CD4-positive, alpha-beta memory T cell (primary cell): ENCODE measurements at regions of chr10 and their contacts with region 1.

Region 1: GRCh38 chr10:95693668-95694534 is at the start of gene TCTN3:
- DNase-seq: peak; percentile 97 to 99 (median 98)
- H3K4me3 ChIP-seq: peak within 1 kb of the TSS; percentile 73 to 97
- H3K4me3 Mint-ChIP-seq: peak within 1 kb of the TSS; percentile 94 to 98 (median 96)
- H3K27ac ChIP-seq: peak within 1 kb of the TSS; percentile 87
- H3K27ac Mint-ChIP-seq: peak within 1 kb of the TSS; percentile 96 to 99 (median 98)
- H3K4me1 ChIP-seq: peaks cover 29% of the 10 kb centered on the region
- H3K4me1 Mint-ChIP-seq: peaks cover 22 to 52% (median 33%) of the 10 kb centered on the region in 4 donors
- H3K27me3 ChIP-seq: no peaks in the 10 kb centered on the region
- H3K27me3 Mint-ChIP-seq: no peaks in the 10 kb centered on the region
- total RNA-seq, gene TCTN3: 20.5 to 22.2 TPM

Region 2: GRCh38 chr10:95447685-95448084 is 246.2 kb before region 1 on chr10:
- CTCF ChIA-PET with region 1: no interaction called
- POLR2A ChIA-PET with region 1: no interaction called
- intact Hi-C with region 1: no loop called
- DNase-seq: no peak
- H3K4me3 ChIP-seq: no peak overlapping the region
- H3K4me3 Mint-ChIP-seq: no peak overlapping the region
- H3K27ac ChIP-seq: no peak overlapping the region
- H3K27ac Mint-ChIP-seq: no peak overlapping the region
- H3K4me1 ChIP-seq: no peaks in the 10 kb centered on the region
- H3K4me1 Mint-ChIP-seq: peaks cover 0 to 1% (median 0%) of the 10 kb centered on the region in 4 donors
- H3K27me3 ChIP-seq: no peaks in the 10 kb centered on the region
- H3K27me3 Mint-ChIP-seq: peaks cover 2 to 4% of the 10 kb centered on the region in 2 donors

Region 3: DNA sequence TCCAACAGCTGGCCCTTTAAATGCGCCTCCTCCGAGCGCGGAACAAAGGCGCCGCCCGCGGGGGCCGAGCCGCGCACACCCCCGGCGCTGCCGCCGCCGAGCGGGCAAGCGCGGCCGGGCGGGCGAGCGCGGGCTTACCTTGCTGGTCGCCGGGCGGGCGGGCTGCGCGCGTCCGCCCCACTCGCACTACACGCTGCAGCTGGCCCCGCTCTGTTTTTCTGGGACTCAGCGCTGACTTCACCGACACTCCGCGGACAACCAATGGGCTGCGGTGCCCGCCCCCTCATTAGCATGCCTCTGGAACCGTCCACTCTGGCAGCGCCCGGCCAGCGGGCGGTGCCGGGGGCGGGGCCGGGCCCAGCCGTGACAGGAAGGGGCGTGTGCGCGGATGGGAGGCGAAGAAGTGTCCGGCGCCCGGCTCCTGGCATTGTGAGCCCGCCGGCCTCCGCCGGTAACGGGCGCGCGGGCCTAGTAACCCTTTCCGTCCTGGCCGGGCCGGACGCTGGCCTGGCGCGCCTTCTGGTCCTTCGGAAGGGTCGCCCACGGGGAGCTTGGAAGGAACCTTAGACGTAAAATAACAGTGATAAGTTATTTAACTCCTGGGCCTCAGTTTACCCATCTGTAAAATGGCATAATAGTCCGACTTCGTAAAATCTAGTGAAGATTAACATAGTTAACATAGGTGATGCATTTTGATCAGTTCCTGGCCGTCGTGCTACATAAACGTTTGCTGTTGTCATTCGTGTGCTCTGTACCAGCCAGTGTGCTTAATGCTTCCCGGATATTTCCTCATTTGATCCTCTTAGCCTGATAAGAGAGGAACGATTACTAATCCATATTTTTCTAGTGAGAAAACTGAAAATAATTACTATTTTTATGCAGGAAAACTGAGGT is 132.5 kb before region 1 on chr10 and contains the start of gene SORBS1:
- CTCF ChIA-PET with region 1: interaction called, 5 read pairs
- POLR2A ChIA-PET with region 1: interaction called, 3 read pairs
- intact Hi-C with region 1: loop called (anchors 1 kb)
- DNase-seq: peak; percentile 85 to 92 (median 87)
- H3K4me3 ChIP-seq: peak within 1 kb of the TSS; percentile 90 to 92
- H3K4me3 Mint-ChIP-seq: peak within 1 kb of the TSS; percentile 96 to 100 (median 100)
- H3K27ac ChIP-seq: peak within 1 kb of the TSS; percentile 54
- H3K27ac Mint-ChIP-seq: peak within 1 kb of the TSS; percentile 83 to 99 (median 96)
- H3K4me1 ChIP-seq: peaks cover 10% of the 10 kb centered on the region
- H3K4me1 Mint-ChIP-seq: peaks cover 8 to 23% (median 11%) of the 10 kb centered on the region in 4 donors
- H3K27me3 ChIP-seq: no peaks in the 10 kb centered on the region
- H3K27me3 Mint-ChIP-seq: peaks cover 0 to 4% of the 10 kb centered on the region in 2 donors
- total RNA-seq, gene SORBS1: 0.67 to 0.93 TPM

Region 4: DNA sequence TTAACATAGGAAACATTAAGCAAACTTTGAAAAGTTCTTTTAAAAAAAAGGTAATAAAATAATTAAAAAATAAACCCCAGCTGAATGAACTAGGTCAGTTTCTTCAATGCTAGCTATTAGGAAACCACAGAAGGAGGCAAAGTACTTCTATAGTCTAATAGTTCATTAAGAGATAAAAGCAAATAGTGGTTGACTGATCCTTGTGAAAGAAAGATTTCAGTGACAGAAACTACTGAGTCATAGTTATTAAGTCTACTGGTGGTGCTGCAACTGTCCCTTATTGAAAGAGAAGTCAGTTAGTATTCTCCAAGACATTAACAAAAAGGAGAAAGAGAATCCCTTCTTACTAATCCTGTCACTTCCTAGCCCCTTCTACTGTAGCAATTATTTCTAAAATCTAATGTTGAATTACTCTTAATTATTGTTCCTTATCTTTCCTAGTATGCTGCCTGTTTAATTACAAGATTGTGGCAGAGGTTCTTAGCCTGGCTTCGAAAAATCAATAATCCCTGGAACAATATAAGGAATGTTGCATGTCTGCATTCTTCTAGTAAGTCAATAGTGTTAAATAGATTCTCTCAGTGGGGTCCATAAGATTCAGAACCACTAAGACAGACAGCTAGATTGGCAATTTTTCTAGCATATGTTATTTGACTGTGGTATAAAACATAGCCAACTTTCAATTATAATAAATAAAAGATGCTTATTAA is 18.3 kb before region 1 on chr10:
- CTCF ChIA-PET with region 1: interaction called, 36 read pairs
- POLR2A ChIA-PET with region 1: interaction called, 3 read pairs
- intact Hi-C with region 1: no loop called
- DNase-seq: no peak
- H3K4me3 ChIP-seq: no peak overlapping the region
- H3K4me3 Mint-ChIP-seq: no peak overlapping the region
- H3K27ac ChIP-seq: no peak overlapping the region
- H3K27ac Mint-ChIP-seq: no peak overlapping the region
- H3K4me1 ChIP-seq: no peaks in the 10 kb centered on the region
- H3K4me1 Mint-ChIP-seq: no peaks in the 10 kb centered on the region
- H3K27me3 ChIP-seq: no peaks in the 10 kb centered on the region
- H3K27me3 Mint-ChIP-seq: no peaks in the 10 kb centered on the region

Region 5: DNA sequence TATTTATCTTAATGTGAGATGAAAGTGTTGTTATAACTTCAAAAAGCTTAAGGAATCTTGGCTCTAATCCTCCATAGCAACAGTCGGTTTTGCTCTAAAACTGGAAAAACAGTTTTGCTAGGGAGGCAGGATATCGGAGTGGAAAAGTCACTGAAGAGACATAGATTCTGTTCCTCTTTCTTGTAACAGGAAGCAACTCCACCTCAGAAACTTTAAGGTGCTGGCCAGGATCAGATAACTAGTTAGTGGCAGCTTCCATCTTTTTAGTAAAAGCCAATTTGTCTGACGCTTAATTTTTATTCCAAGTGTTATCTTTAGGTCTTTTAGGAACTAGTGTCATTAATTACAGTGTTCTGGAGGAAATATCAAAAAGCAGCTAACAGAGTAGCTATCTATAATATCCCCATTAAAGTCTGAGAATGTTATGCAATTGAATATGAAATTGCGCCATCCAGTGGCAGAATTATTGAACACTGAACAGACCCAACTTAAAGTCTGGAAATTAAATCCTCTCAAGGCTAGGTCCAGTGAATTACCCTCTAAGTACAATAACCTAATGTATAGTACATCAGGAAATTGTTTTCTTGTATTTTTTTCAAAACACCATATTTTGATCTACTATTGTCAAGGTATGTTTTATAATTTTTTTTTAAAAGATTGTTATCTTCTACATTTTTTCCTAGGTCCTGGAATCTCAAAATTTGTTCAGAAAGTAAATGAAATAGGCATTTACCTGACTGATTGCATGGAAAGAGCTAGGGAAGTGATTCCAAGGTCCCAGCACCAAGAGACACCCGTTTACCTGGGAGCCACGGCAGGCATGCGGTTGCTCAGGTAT is 148.0 kb after region 1 on chr10:
- CTCF ChIA-PET with region 1: interaction called, 290 read pairs
- POLR2A ChIA-PET with region 1: interaction called, 27 read pairs
- intact Hi-C with region 1: loop called (anchors 1 kb)
- DNase-seq: peak in 4 of 5 donors; percentile 28 to 57 (median 55)
- H3K4me3 ChIP-seq: no peak overlapping the region
- H3K4me3 Mint-ChIP-seq: no peak overlapping the region
- H3K27ac ChIP-seq: peak overlapping the region; percentile 35
- H3K27ac Mint-ChIP-seq: peak overlapping the region; percentile 26 to 88 (median 53)
- H3K4me1 ChIP-seq: peaks cover 8% of the 10 kb centered on the region
- H3K4me1 Mint-ChIP-seq: peaks cover 0 to 18% (median 3%) of the 10 kb centered on the region in 4 donors
- H3K27me3 ChIP-seq: no peaks in the 10 kb centered on the region
- H3K27me3 Mint-ChIP-seq: peaks cover 0 to 2% of the 10 kb centered on the region in 2 donors

Region 6: GRCh38 chr10:95880704-95881103 is 186.8 kb after region 1 on chr10:
- CTCF ChIA-PET with region 1: no interaction called
- POLR2A ChIA-PET with region 1: no interaction called
- intact Hi-C with region 1: no loop called
- DNase-seq: no peak
- H3K4me3 ChIP-seq: no peak overlapping the region
- H3K4me3 Mint-ChIP-seq: no peak overlapping the region
- H3K27ac ChIP-seq: no peak overlapping the region
- H3K27ac Mint-ChIP-seq: no peak overlapping the region
- H3K4me1 ChIP-seq: no peaks in the 10 kb centered on the region
- H3K4me1 Mint-ChIP-seq: no peaks in the 10 kb centered on the region
- H3K27me3 ChIP-seq: no peaks in the 10 kb centered on the region
- H3K27me3 Mint-ChIP-seq: no peaks in the 10 kb centered on the region

Region 7: DNA sequence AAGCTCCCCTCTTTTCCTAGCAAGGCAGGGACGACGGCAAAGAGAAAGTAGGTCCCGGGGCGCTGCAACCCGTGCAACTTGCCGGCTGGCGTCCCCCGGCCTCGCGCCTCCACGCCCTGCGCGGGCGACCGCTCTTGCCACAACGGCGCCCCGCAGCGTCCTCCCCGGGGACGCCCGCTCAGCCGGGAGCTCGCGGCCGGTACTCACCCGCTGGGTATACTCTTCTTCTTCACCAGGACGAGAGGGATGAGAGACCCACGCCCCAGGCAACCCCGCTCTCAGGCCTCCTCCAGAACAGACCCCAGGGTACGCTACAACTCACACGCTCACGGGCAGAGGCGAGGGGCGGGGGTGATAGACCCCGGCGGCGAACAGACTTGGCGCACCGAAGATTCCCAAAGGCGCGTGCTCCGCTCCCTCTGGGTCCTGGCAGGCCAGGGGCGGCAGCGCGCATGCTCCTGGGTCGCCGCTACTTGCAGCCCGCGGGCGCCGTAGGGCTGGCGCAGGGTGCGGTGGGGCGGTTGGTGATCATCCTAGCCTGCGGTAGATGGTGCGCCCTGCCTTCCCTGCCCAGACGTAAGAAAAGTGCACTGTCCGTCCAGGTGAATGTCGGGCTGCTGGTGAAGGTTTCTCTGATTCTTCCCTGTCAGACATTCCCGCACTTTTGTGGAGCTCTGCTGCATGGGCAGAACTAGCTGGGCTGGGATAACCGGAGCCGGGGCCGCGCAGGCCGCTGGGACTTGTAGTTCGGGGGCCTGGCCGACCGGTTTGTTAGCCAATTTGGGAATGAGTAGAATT is 213.8 kb after region 1 on chr10 and contains the start of gene CC2D2B:
- CTCF ChIA-PET with region 1: interaction called, 19 read pairs
- POLR2A ChIA-PET with region 1: interaction called, 6 read pairs
- intact Hi-C with region 1: loop called (anchors 1 kb)
- DNase-seq: peak; percentile 46 to 63 (median 55)
- H3K4me3 ChIP-seq: peak within 1 kb of the TSS; percentile 73 to 86
- H3K4me3 Mint-ChIP-seq: peak within 1 kb of the TSS; percentile 91 to 96 (median 93)
- H3K27ac ChIP-seq: peak within 1 kb of the TSS; percentile 58
- H3K27ac Mint-ChIP-seq: peak within 1 kb of the TSS; percentile 76 to 91 (median 88)
- H3K4me1 ChIP-seq: no peaks in the 10 kb centered on the region
- H3K4me1 Mint-ChIP-seq: peaks cover 8 to 15% (median 12%) of the 10 kb centered on the region in 4 donors
- H3K27me3 ChIP-seq: no peaks in the 10 kb centered on the region
- H3K27me3 Mint-ChIP-seq: no peaks in the 10 kb centered on the region
- total RNA-seq, gene CC2D2B: 0.15 TPM in 1 of 2 experiments, not detected in the other

Region 8: GRCh38 chr10:96089670-96090462 is 396.0 kb after region 1 on chr10:
- CTCF ChIA-PET with region 1: interaction called, 13 read pairs
- POLR2A ChIA-PET with region 1: interaction called, 16 read pairs
- intact Hi-C with region 1: loop called (anchors 1 kb)
- DNase-seq: peak; percentile 89 to 94 (median 91)
- H3K4me3 ChIP-seq: peak overlapping the region; percentile 71 to 88
- H3K4me3 Mint-ChIP-seq: peak overlapping the region; percentile 91 to 97 (median 96)
- H3K27ac ChIP-seq: peak overlapping the region; percentile 91
- H3K27ac Mint-ChIP-seq: peak overlapping the region; percentile 98 to 100 (median 99)
- H3K4me1 ChIP-seq: peaks cover 12% of the 10 kb centered on the region
- H3K4me1 Mint-ChIP-seq: peaks cover 5 to 11% (median 7%) of the 10 kb centered on the region in 4 donors
- H3K27me3 ChIP-seq: peaks cover 9% of the 10 kb centered on the region
- H3K27me3 Mint-ChIP-seq: peaks cover 23 to 26% of the 10 kb centered on the region in 2 donors

Region 9: GRCh38 chr10:97334370-97335175 is 1640.7 kb after region 1 on chr10 and contains the start of gene FRAT2:
- CTCF ChIA-PET with region 1: no interaction called
- POLR2A ChIA-PET with region 1: no interaction called
- intact Hi-C with region 1: loop called (anchors 2 kb)
- DNase-seq: peak; percentile 86 to 95 (median 92)
- H3K4me3 ChIP-seq: peak within 1 kb of the TSS; percentile 64 to 67
- H3K4me3 Mint-ChIP-seq: peak within 1 kb of the TSS; percentile 88 to 95 (median 92)
- H3K27ac ChIP-seq: peak within 1 kb of the TSS; percentile 98
- H3K27ac Mint-ChIP-seq: peak within 1 kb of the TSS; percentile 88 to 95 (median 93)
- H3K4me1 ChIP-seq: peaks cover 35% of the 10 kb centered on the region
- H3K4me1 Mint-ChIP-seq: peaks cover 26 to 44% (median 34%) of the 10 kb centered on the region in 4 donors
- H3K27me3 ChIP-seq: no peaks in the 10 kb centered on the region
- H3K27me3 Mint-ChIP-seq: peaks cover 0 to 1% of the 10 kb centered on the region in 2 donors
- total RNA-seq, gene FRAT2: 28.7 to 30.4 TPM